Activated T-helper 2 cell treated with anti-CD3 and anti-CD28 coated beads, Interferon-gamma antibody, Interleukin-2, Interleukin-4, amounts not matched to agents 10 μg/mL and 5 μg/mL and 100 μg/mL, durations not matched to agents 14 hours and 24 hours and 36 hours (primary cell): ENCODE measurements at regions of chr7 and their contacts with region 1.

Region 1: DNA sequence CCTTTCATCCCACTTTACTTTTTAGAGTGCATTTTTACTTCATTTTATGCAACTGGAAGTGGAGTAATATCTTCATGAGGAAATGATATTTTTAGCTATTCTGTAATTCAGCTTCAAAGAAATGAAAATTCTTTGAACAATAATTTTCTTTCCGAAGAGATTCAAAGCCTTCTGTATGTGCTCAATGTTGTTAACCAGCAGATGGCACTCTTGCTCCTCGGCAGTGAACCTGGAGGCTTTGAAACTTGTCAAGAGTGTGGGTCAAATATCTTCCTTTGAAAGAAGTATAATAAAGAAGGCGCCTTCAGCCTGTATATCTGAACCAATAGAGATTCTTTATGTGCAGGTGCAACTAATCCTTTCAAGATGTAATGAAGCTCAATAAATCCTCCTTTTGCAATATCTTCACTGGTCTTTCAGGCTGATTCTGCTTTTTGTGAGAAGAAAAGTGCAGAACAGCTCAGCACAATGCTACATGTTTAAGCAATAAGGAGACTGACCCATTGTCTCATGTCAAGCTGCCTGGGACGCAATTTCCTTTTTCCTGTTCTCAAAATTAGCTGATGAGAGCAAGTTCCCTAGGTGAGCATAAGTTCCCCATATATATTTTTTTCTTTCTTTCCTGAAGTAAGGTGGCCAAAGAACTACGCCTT is 258.4 kb downstream of the SEMA3A start:
- DNase-seq: peak; percentile 19
- H3K4me3 Mint-ChIP-seq: no peak overlapping the region
- H3K27ac Mint-ChIP-seq: no peak overlapping the region
- H3K4me1 Mint-ChIP-seq: no peaks in the 10 kb centered on the region
- H3K27me3 Mint-ChIP-seq: no peaks in the 10 kb centered on the region

Region 2: DNA sequence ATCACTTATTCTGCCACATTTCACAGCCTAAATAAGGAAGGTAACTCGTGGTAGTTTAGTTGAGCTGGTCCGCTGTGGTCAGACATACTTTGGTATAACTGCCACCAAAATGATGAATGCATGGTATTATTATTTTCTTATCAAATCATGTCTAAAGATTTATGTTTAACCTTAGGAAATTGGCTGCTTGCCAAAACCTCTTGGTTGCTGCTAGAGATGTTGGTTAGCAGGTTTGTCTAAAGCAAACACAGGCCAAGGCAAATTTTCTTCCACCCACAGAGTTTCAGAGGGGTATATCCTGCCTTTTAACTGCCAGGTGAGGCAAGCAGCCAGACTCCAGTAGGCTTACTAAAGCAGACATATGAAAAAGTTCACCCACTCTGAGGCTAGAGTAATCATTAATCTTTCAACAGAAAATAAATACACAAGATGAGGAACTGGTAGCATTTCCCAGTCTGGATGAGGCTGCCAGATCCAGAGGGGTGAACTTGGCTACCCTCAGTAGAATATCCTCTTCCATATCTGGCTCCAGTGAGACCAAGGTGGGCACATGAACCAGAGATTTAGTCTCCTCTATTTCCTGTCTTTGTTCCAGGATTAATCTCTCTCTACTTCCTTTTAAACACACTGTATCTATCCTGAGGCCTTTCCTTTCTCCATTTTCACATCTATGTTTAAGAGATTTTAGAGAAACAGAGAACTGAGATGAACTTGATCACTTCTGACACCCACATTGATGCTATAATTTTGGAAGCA is 388.5 kb before region 1 on chr7:
- intact Hi-C with region 1: no loop called
- DNase-seq: no peak
- H3K4me3 Mint-ChIP-seq: no peak overlapping the region
- H3K27ac Mint-ChIP-seq: no peak overlapping the region
- H3K4me1 Mint-ChIP-seq: no peaks in the 10 kb centered on the region
- H3K27me3 Mint-ChIP-seq: no peaks in the 10 kb centered on the region

Region 3: DNA sequence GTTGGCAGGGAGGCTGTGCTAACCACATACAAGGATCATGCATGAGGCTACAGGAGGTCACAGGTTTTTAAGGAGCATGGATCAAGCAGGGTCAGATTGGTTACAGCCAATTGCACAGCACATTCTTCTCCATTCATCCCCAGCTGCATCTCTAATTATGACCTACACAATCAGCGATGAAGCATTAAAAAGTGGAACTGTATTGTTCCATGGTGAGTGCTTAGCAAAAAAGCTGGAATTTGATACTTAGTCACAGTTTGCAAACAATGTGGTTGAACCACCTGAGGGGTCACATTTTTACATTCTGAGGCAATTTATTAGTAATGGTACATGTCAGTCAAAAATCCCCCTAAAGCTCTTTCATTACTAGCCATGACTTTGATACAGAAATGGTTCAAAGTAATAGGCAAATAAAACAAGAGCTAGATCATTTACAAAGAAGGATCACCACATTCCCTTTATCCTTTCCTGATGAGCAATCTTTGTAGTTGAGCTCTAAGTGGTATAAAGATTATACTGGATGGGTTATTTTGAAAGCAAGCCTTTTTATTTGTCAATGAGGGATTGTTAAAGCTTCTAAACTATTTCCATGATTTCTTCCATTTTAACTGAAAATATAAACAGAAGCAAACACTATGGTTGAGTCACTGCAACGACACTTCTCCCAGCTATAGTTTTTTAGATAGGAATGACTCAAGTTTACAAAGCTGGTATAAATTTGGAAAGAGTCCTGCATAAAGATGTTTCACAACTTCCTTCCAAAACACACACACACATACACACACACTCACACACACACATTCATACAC is 476.2 kb after region 1 on chr7:
- intact Hi-C with region 1: no loop called
- DNase-seq: no peak
- H3K4me3 Mint-ChIP-seq: no peak overlapping the region
- H3K27ac Mint-ChIP-seq: no peak overlapping the region
- H3K4me1 Mint-ChIP-seq: no peaks in the 10 kb centered on the region
- H3K27me3 Mint-ChIP-seq: no peaks in the 10 kb centered on the region

Region 4: GRCh38 chr7:85023045-85023712 is 1087.0 kb after region 1 on chr7:
- intact Hi-C with region 1: loop called (anchors 1 kb)
- DNase-seq: no peak
- H3K4me3 Mint-ChIP-seq: no peak overlapping the region
- H3K27ac Mint-ChIP-seq: no peak overlapping the region
- H3K4me1 Mint-ChIP-seq: no peaks in the 10 kb centered on the region
- H3K27me3 Mint-ChIP-seq: no peaks in the 10 kb centered on the region